ENCODE measurements at regions of chr12 and their contacts with region 1.

Region 1: GRCh38 chr12:17778242-17778641 is 311.8 kb downstream of the RERGL start:
- DNase-seq: no peak
- H3K4me3 ChIP-seq: no peak overlapping the region
- H3K27ac ChIP-seq: no peak overlapping the region
- H3K4me1 ChIP-seq: no peaks in the 10 kb centered on the region
- H3K27me3 ChIP-seq: no peaks in the 10 kb centered on the region
- CTCF ChIP-seq: no peak

Region 2: DNA sequence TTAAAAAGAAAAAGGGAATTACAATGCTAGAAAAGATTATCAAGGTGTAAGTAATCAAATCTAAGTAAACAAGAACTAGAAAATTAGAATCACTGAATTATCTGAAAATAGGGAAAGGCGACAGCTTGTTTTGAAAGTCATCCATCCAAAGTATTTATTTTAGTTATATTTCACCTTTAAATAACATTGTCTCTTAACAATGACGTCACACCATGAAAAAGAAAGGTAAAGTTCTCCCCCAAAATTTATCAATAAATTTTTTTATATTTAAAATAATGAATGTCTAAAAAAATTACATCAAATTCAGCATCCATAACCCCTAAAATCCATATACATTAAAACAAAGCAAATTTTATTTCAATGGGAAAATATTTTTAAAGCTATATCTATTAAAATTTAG is 88.6 kb after region 1 on chr12:
- CTCF ChIA-PET with region 1: no interaction called
- dilution Hi-C with region 1: no loop called
- in situ Hi-C with region 1: loop called in 1 of 2 experiments (anchors 5 kb)
- intact Hi-C with region 1: loop called (anchors 2 kb)
- DNase-seq: no peak
- H3K4me3 ChIP-seq: no peak overlapping the region
- H3K27ac ChIP-seq: no peak overlapping the region
- H3K4me1 ChIP-seq: no peaks in the 10 kb centered on the region
- H3K27me3 ChIP-seq: no peaks in the 10 kb centered on the region
- CTCF ChIP-seq: no peak